Thyroid gland (tissue), 4 donors: ENCODE measurements at regions of chr1 and their contacts with region 1.

Region 1: GRCh38 chr1:199684686-199685273 is 342.7 kb upstream of the NR5A2 start:
- DNase-seq: peak; percentile 9 to 17
- H3K4me3 ChIP-seq: no peak overlapping the region
- H3K27ac ChIP-seq: no peak overlapping the region
- H3K4me1 ChIP-seq: no peaks in the 10 kb centered on the region
- H3K27me3 ChIP-seq: no peaks in the 10 kb centered on the region
- CTCF ChIP-seq: peak; percentile 36 to 85 (median 76)
- POLR2A ChIP-seq: no peak

Region 2: DNA sequence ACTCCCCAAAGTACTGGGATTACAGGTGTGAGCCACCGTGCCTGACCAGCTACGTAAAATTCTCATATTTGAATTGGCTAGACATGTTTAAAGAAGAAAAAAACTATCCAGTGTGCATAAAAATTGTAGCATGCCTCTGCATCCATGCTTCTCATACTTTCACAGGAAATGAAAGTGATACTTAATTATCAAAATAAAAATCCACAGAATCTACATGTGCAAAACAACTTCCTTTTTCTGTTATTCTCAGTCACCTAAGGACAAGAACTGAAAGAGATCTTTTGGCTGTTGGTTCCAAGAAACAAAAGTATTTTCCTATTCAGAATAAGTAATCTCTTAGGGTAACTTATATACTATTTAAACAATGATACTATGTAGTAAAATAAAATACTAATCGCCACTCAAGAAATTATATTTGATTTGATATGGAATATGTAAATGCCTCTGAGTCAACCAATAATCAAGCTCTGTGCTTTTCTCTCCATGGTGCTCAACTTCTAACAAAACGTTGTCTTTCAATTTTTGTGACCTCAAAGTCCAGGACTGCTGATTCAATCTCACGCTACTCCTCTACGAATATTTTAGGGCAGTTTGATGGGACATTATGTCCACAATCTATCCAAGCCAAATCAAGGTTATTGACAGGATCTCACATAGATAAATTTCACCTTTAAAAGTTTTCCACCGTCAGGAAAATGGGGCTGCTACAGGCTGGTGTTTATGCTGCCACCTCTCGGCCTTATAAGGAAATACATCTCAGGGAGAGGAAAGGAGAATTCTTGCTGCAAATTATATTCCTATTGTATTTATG is 622.4 kb after region 1 on chr1:
- intact Hi-C with region 1: loop called (anchors 5 kb)
- DNase-seq: no peak
- H3K4me3 ChIP-seq: no peak overlapping the region
- H3K27ac ChIP-seq: no peak overlapping the region
- H3K4me1 ChIP-seq: peaks cover 0 to 3% of the 10 kb centered on the region in 2 donors
- H3K27me3 ChIP-seq: no peaks in the 10 kb centered on the region
- CTCF ChIP-seq: peak; percentile 45 to 90 (median 66)
- POLR2A ChIP-seq: no peak

Region 3: GRCh38 chr1:200506471-200506870 is 821.7 kb after region 1 on chr1:
- intact Hi-C with region 1: loop called (anchors 10 kb)
- DNase-seq: no peak
- H3K4me3 ChIP-seq: no peak overlapping the region
- H3K27ac ChIP-seq: no peak overlapping the region
- H3K4me1 ChIP-seq: no peaks in the 10 kb centered on the region
- H3K27me3 ChIP-seq: no peaks in the 10 kb centered on the region
- CTCF ChIP-seq: no peak
- POLR2A ChIP-seq: no peak